ENCODE measurements at regions of chr11 and their contacts with region 1.

Region 1: GRCh38 chr11:36702330-36703055 is 104.5 kb upstream of the RAG2 start:
- DNase-seq: peak; percentile 41
- ATAC-seq: peak; percentile 94
- H3K4me3 ChIP-seq: no peak overlapping the region
- H3K27ac ChIP-seq: no peak overlapping the region
- H3K4me1 ChIP-seq: peaks cover 5% of the 10 kb centered on the region; the same call in 1 of the 2 replicates
- H3K27me3 ChIP-seq: no peaks in the 10 kb centered on the region
- CTCF ChIP-seq: peak; percentile 72 to 96 (median 90)
- EP300 ChIP-seq: no peak
- POLR2A ChIP-seq: no peak
- RAD21 ChIP-seq: peak; percentile 97

Region 2: GRCh38 chr11:36738292-36738861 is 35.9 kb after region 1 on chr11:
- CTCF ChIA-PET with region 1: interaction called, 37 read pairs
- POLR2A ChIA-PET with region 1: no interaction called
- RAD21 ChIA-PET with region 1: interaction called, 6 read pairs
- SMC1A ChIA-PET with region 1: interaction called, 11 read pairs
- in situ Hi-C with region 1: no loop called
- intact Hi-C with region 1: no loop called
- DNase-seq: no peak
- ATAC-seq: peak; percentile 11; the same call in 2 of the 3 replicates
- H3K4me3 ChIP-seq: no peak overlapping the region
- H3K27ac ChIP-seq: no peak overlapping the region
- H3K4me1 ChIP-seq: peaks cover 16% of the 10 kb centered on the region
- H3K27me3 ChIP-seq: no peaks in the 10 kb centered on the region
- CTCF ChIP-seq: no peak
- EP300 ChIP-seq: no peak
- POLR2A ChIP-seq: no peak
- RAD21 ChIP-seq: no peak

Region 3: DNA sequence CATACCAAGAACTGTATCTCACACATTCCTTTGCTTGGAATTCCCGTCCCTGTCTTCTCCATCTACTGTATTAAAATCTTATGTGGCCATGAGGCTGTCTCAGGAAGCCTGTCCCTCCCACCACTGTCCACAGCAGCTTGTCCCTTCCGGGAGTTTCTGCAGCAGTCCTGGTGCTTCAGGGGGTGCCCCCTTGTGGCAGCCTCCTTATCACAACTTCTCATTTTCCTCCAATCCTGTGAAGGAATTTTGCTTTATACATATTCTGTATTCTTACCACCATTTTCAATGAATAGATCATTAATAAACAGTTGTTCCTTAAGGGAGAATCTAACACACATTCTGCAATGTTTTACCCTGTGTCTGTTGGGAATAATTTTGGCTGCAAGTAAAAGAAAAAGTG is 115.9 kb after region 1 on chr11:
- CTCF ChIA-PET with region 1: no interaction called
- POLR2A ChIA-PET with region 1: no interaction called
- RAD21 ChIA-PET with region 1: no interaction called
- SMC1A ChIA-PET with region 1: no interaction called
- in situ Hi-C with region 1: no loop called
- intact Hi-C with region 1: loop called (anchors 2 kb)
- DNase-seq: no peak
- ATAC-seq: peak; percentile 65
- H3K4me3 ChIP-seq: no peak overlapping the region
- H3K27ac ChIP-seq: no peak overlapping the region
- H3K4me1 ChIP-seq: no peaks in the 10 kb centered on the region
- H3K27me3 ChIP-seq: no peaks in the 10 kb centered on the region
- CTCF ChIP-seq: peak; percentile 29 to 50 (median 42)
- EP300 ChIP-seq: no peak
- POLR2A ChIP-seq: no peak
- RAD21 ChIP-seq: no peak

Measured in GM12878 (cell line).